ENCODE measurements at regions of chr17 and their contacts with region 1.

Region 1: DNA sequence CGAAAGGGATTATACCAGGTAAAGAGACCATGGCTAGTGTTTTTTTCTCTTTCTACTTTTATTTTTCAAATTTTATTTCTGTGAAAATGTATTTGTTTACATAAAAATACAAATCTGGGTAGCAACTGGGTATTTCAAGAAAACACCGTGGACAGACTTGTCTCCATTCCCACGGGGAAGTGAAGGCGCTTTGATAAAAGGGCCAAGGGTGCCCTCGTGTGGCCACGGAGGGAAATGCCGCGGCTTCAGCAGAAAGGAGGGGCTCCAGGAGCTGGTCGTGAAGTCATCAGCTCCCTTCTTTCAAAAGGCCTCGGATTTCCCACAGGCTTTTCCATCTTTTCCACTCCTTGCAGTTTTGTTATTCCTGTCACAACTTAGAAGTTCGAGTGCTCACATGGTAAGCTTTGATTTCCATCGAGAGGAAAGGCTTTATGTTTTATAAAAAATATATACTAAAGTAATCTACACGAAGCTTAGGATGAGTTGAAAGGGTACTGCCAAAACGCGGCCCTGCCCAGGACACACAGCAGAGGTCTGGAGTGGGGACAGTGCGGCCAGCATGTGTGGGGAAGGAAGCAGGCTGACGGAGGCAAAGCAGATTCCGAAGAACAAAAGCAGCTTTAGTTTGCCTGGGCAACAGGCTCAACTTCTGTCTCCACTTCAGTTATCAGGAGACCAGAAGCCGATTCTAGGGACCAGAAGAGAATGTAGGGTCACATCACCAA is 15.3 kb upstream of the MNT start:
- DNase-seq: peak; percentile 85 to 97 (median 93)
- H3K4me3 ChIP-seq: peak overlapping the region in 5 of 59 donors; percentile 4 to 26 (median 9)
- H3K27ac ChIP-seq: peak overlapping the region in 49 of 59 donors; percentile 0 to 77 (median 59)
- H3K27me3 ChIP-seq: no peaks in the 10 kb centered on the region
- CTCF ChIP-seq: peak; percentile 93 to 100 (median 98)

Region 2: DNA sequence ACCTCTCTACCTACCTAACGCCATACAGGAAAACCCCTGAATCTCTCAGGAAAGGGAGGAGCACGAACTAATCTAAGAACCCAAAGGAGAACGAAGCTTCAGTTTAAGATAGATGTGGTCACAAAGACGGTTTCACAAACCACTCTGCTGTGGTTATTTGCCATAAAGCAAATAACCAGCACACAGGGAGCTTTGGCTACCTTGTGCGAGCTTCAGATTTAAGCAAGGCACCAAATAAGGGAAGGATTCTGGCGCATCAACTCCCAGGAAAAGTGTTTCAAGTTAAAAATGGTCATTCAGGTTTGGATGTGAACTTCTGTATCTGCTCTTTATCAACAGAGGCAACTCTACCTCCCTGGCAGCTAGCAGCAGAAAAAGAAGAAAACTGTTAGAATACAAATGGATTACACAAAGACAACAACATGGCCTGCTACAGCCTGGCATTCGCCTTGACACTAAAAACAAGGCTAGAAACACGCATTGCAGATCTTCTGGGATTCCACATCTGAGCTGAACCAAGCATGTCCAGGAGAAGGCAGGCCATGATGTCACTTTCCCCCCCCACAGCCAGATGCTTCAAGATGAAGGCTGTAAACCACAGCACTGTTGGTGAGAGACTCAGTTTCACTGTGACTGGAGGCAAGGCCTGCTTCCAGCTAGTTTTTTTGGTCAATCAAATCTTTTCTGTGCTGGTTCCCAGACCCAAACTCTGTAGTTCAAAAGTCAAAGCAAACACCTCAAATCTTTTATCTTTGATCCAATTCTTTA is 156.2 kb before region 1 on chr17:
- intact Hi-C with region 1: no loop called
- DNase-seq: peak in 1 of 10 donors; percentile 7
- H3K4me3 ChIP-seq: no peak overlapping the region
- H3K27ac ChIP-seq: peak overlapping the region in 8 of 59 donors; percentile 11 to 59 (median 30)
- H3K27me3 ChIP-seq: no peaks in the 10 kb centered on the region
- CTCF ChIP-seq: no peak

Region 3: DNA sequence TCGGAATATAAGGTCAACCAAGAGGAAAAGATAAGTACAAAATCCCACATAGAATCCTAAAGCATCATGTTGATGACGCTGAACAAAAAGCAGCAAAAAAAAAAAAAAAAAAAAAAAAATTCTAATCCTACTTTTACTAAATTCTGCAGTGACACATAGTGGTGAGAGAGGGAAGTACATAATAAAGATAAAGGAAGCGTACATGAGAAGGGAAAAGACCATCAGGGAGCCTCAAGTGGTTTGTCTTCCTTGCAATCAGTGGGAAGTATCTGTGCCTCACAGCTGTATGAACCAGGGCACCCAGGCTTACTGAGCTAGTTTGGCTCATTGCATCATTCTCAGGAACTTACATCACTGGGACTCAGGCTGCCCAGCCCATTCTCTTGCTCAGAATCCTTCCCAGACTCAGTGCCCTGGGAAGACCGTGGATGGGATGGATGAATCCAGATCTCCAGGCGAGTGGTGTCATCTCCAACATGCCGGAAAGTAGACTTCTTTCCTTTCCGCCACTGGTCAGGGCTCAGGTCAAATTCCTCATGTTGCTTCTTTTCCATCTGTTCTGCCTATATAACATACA is 133.8 kb before region 1 on chr17:
- intact Hi-C with region 1: no loop called
- DNase-seq: no peak
- H3K4me3 ChIP-seq: no peak overlapping the region
- H3K27ac ChIP-seq: peak overlapping the region in 1 of 59 donors; percentile 1
- H3K27me3 ChIP-seq: no peaks in the 10 kb centered on the region
- CTCF ChIP-seq: peak; percentile 51 to 82 (median 71)

Region 4: DNA sequence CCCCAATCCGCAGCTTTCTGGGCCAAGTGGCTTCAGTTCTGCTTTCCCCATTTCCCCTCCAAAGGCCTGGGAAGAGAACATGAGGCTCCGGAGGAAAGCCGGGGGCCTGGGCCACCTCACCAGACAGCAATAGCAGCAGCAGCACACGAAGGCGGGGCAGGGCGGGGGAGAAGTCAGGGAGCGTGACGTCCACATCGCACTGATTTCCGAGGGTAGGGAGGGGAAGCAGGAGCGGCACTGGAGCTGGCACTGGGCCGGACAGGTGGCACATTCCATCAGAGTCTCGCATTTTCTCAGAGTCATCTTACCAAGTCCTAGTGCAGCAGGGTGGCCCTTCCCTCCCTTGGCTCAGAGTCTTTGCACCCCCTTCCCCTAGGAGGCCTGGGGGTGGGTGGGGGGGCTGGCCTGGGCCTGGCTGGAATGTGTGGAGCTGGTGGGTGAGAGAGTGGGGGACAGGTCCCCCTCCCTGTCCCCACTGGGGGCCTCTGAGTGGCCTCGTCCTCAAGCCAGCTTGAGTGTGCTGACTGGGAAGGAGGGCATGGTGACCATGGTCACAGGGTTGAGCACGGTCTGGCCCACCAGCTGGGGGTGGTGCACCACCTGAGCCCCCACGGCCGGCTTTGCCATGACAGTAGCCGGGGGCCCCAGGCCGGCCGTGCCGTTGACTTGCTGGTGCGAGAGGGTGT is 29.6 kb before region 1 on chr17:
- intact Hi-C with region 1: loop called (anchors 1 to 2 kb)
- DNase-seq: peak in 2 of 10 donors; percentile 66 to 82
- H3K4me3 ChIP-seq: peak overlapping the region in 1 of 59 donors; percentile 20
- H3K27ac ChIP-seq: peak overlapping the region in 44 of 59 donors; percentile 1 to 81 (median 53)
- H3K27me3 ChIP-seq: no peaks in the 10 kb centered on the region
- CTCF ChIP-seq: no peak

Region 5: DNA sequence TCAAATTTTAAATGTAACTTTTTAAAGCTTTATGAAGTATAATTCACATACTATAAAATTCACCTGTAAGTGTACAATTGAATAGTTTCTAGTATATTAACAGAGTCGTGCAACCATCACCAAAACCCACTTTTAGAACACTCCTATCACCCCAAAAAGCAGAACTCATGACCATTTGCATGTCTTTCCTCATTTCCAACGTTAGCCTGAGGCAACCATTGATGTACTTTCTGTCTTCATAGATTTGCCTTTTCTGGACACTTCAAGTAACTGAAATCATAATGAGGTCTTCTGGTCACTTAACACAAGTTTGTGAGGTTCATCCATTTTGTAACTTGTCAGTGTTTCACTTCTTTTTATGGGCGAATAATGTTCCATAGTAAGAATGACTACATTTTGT is 62.3 kb after region 1 on chr17:
- intact Hi-C with region 1: no loop called
- DNase-seq: no peak
- H3K4me3 ChIP-seq: no peak overlapping the region
- H3K27ac ChIP-seq: peak overlapping the region in 2 of 59 donors; percentile 19 to 52
- H3K27me3 ChIP-seq: no peaks in the 10 kb centered on the region
- CTCF ChIP-seq: no peak

Region 6: DNA sequence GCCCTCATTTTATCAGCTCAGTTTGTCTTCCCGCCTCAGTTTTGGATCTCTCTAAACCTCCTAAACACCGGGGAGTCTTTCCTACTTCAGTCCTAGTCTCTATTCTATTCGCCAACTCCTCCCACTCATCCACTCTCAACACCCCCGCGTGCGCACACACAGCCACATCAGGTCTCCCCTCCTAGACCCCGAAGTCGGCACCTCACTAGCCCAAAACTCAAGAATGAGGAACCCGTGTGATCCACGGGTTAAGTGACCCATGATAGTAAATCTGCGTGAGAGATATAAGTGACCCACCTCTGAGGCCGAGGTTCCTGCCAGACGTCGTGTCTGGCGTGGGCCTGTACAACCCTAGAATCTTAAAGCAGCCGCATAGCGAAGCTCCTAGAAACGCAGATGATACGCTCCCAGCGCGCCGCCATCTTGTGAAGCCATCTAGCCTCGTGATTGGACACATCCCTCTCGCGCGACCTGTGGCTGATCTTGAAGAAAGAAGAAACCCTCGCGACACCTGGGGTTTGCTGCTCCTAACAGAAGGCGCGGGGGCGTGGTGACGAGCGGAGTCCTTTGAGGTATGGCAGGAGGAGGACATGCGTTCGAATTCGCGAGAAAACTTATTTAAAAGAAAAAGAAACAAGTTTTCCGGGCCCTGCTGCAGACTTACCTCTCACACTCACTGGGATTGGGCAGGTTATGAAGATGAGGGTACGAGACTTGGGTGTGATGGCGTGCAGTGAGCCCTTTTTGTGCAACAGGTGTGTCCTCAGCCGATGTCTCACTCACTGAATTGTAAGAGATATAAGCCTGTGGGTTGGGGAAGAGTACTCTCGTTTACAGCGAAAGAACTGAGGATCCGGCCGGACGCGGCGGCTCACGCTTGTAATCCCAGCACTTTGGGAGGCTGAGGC is 95.5 kb after region 1 on chr17 and contains the start of gene METTL16:
- intact Hi-C with region 1: loop called in 1 of 2 experiments (anchors 5 kb)
- DNase-seq: peak; percentile 91 to 99 (median 96)
- H3K4me3 ChIP-seq: peak within 1 kb of the TSS; percentile 42 to 94 (median 80)
- H3K27ac ChIP-seq: peak within 1 kb of the TSS; percentile 76 to 98 (median 92)
- H3K27me3 ChIP-seq: no peaks in the 10 kb centered on the region
- CTCF ChIP-seq: peak in 35 of 56 donors; percentile 6 to 45 (median 25)
- total RNA-seq, gene METTL16: 19.6 to 52.4 (median 31.1) TPM

Region 7: DNA sequence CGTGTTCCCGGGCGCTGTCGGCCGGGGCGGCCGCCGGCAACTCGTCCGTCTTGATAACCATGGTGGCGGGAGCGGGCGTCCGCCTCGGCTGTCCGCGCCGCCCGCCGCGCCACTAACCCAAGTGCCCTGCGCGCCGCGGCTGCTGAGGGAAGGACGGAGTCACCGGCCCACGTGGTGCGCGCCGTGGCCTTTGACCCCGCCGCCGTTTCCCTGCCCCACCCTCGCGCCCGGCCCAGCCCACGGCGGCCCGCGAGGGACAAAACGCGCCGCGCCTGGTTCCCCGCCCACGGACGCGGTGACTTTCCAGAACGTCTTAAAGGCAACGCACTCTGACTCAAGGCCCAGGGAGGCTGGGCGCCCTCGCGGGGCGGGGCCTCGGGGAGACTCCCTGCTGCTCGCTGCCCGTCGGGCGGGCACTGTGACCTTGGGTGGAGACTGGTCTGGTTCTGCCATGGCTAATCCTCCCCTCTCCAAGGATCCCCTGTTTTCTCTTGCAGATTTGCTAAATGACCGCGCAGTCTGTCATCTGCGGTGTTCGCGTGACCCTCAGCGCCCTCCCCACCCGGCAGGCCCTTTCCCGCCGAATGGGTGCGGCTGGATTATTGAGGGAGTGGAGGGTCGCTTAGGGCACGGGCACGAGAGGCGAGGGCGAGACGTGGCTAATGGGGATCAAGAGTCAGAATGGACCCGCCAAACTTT is 295.6 kb after region 1 on chr17 and contains the start of gene CLUH:
- intact Hi-C with region 1: loop called in 1 of 2 experiments (anchors 5 kb)
- DNase-seq: peak; percentile 91 to 97 (median 94)
- H3K4me3 ChIP-seq: peak within 1 kb of the TSS; percentile 55 to 98 (median 89)
- H3K27ac ChIP-seq: peak within 1 kb of the TSS; percentile 35 to 96 (median 87)
- H3K27me3 ChIP-seq: no peaks in the 10 kb centered on the region
- CTCF ChIP-seq: peak in 41 of 56 donors; percentile 7 to 59 (median 36)
- total RNA-seq, gene CLUH: 46.1 to 95.4 (median 67.1) TPM